Activated CD4-positive, alpha-beta T cell treated with anti-CD3 and anti-CD28 coated beads, Interleukin-2, amount 10 ng/mL, durations not matched to agents 24 days and 14 days (primary cell): ENCODE measurements at regions of chr21 and their contacts with region 1.

Region 1: GRCh38 chr21:35095859-35096291 is 46.8 kb upstream of the RUNX1 start:
- DNase-seq: no peak
- H3K4me3 Mint-ChIP-seq: no peak overlapping the region
- H3K27ac Mint-ChIP-seq: peak overlapping the region; percentile 92
- H3K4me1 Mint-ChIP-seq: peaks cover 29% of the 10 kb centered on the region
- H3K27me3 Mint-ChIP-seq: no peaks in the 10 kb centered on the region

Region 2: DNA sequence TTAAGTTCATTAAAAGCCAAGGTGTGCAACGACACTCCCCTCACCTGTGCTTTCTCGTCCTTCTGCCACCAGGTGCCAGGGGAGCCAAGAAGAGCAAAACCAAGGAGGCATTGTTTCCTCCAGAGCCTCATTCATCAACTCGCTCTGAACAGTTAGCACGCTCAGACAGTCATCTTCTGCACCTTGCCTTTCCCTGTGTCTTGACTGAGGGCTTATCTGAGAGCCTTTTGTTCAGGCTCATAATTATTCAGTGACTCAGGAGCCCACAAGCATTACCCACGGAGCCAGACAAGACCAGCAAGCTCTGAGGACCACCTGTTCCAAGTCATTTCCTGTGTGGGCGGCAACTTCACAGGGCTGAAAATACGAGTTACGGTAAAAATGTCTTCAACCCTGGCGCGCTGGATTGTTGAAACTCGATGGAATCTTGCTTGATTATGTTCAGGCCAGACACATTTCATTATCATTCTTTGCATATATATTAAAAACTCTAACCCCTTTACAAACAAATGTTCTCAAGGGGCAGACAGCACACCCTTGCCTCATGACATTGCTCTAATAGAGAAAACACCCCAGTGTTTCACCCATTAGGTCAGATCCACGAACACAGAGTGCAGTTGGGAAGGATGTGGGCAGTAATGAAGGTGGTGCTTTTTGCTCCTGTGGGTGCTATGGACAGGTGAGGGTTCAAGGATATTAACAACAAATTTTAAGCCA is 42.9 kb after region 1 on chr21:
- intact Hi-C with region 1: loop called (anchors 1 kb)
- DNase-seq: peak; percentile 68
- H3K4me3 Mint-ChIP-seq: peak overlapping the region; percentile 74
- H3K27ac Mint-ChIP-seq: peak overlapping the region; percentile 97
- H3K4me1 Mint-ChIP-seq: peaks cover 30% of the 10 kb centered on the region
- H3K27me3 Mint-ChIP-seq: no peaks in the 10 kb centered on the region

Region 3: DNA sequence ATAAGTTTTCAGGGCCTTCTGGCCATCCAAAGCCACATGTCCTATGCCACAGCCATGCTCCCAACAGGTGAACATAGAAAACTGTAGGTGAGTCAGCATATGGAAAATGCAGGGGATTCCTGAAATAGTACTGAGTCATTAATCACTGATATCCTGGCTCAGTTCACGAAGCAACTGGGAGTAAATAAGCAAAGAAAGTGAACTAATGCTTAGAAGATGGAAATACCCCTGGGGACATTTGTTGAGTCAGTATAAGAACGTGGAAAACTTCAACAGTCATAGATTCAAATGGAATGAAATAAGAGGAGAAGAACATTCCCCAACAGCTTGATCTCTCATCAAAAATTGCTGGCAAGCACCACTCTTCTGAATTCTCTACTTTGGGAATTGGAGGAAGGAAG is 102.2 kb after region 1 on chr21:
- intact Hi-C with region 1: loop called (anchors 2 kb)
- DNase-seq: no peak
- H3K4me3 Mint-ChIP-seq: no peak overlapping the region
- H3K27ac Mint-ChIP-seq: peak overlapping the region; percentile 25
- H3K4me1 Mint-ChIP-seq: peaks cover 26% of the 10 kb centered on the region
- H3K27me3 Mint-ChIP-seq: no peaks in the 10 kb centered on the region

Region 4: GRCh38 chr21:35342440-35342839 is 246.6 kb after region 1 on chr21:
- intact Hi-C with region 1: loop called (anchors 1 kb)
- DNase-seq: no peak
- H3K4me3 Mint-ChIP-seq: peak overlapping the region; percentile 53
- H3K27ac Mint-ChIP-seq: peak overlapping the region; percentile 88
- H3K4me1 Mint-ChIP-seq: peaks cover 41% of the 10 kb centered on the region
- H3K27me3 Mint-ChIP-seq: no peaks in the 10 kb centered on the region